ENCODE measurements at regions of chr14 and their contacts with region 1.

Region 1: DNA sequence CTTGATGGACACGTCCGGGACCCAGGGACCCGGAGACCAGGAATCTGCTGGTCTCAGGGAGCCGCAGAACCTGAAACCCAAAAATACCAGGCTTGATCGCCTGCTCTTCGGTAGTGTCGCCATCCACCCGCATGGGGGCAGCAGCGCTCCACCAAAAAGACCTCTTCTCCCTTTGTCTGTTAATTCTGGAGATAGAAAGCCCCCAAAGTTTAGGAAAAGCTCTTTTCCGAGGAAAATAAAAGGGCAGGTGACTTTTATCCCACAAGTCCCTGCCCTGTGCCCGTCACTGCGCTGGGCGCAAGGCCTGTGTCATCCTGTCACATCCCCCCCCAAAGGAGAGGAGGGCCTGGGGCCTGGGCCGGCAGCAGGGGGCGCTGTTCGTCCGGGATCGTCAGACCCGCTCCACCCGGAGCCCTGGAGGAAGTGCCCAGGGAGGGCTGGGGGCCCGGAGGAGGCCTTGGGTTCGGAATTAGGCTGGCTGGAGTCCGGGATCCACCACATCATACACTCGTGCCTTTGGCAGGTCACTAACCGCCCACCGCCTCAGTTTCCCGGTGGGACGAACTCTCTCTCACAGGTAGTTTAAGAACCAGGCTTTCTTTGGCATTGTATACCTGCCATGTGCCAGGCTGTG is 31.9 kb downstream of the DAD1 start:
- DNase-seq: peak; percentile 90
- ATAC-seq: peak; percentile 43
- H3K4me3 Mint-ChIP-seq: peak overlapping the region; percentile 80
- H3K27ac Mint-ChIP-seq: peak overlapping the region; percentile 98
- H3K4me1 Mint-ChIP-seq: peaks cover 88% of the 10 kb centered on the region
- H3K27me3 Mint-ChIP-seq: peaks cover 4% of the 10 kb centered on the region
- CTCF ChIP-seq: peak; percentile 100

Region 2: GRCh38 chr14:22403281-22403680 is 153.8 kb before region 1 on chr14:
- CTCF ChIA-PET with region 1: no interaction called
- POLR2A ChIA-PET with region 1: no interaction called
- intact Hi-C with region 1: no loop called
- DNase-seq: no peak
- ATAC-seq: no peak
- H3K4me3 Mint-ChIP-seq: no peak overlapping the region
- H3K27ac Mint-ChIP-seq: no peak overlapping the region
- H3K4me1 Mint-ChIP-seq: no peaks in the 10 kb centered on the region
- H3K27me3 Mint-ChIP-seq: peaks cover 2% of the 10 kb centered on the region
- CTCF ChIP-seq: no peak

Region 3: GRCh38 chr14:22448905-22449599 is 108.1 kb before region 1 on chr14:
- CTCF ChIA-PET with region 1: interaction called, 7 read pairs
- POLR2A ChIA-PET with region 1: interaction called, 15 read pairs
- intact Hi-C with region 1: no loop called
- DNase-seq: no peak
- ATAC-seq: peak; percentile 58
- H3K4me3 Mint-ChIP-seq: peak overlapping the region; percentile 3
- H3K27ac Mint-ChIP-seq: peak overlapping the region; percentile 78
- H3K4me1 Mint-ChIP-seq: peaks cover 23% of the 10 kb centered on the region
- H3K27me3 Mint-ChIP-seq: no peaks in the 10 kb centered on the region
- CTCF ChIP-seq: no peak

Region 4: GRCh38 chr14:22497144-22497423 is 60.0 kb before region 1 on chr14:
- CTCF ChIA-PET with region 1: interaction called, 24 read pairs
- POLR2A ChIA-PET with region 1: interaction called, 64 read pairs
- intact Hi-C with region 1: loop called (anchors 1 kb)
- DNase-seq: no peak
- ATAC-seq: peak; percentile 23
- H3K4me3 Mint-ChIP-seq: peak overlapping the region; percentile 12
- H3K27ac Mint-ChIP-seq: peak overlapping the region; percentile 81
- H3K4me1 Mint-ChIP-seq: peaks cover 69% of the 10 kb centered on the region
- H3K27me3 Mint-ChIP-seq: no peaks in the 10 kb centered on the region
- CTCF ChIP-seq: no peak

Region 5: GRCh38 chr14:22536853-22537338 is 20.2 kb before region 1 on chr14:
- CTCF ChIA-PET with region 1: interaction called, 48 read pairs
- POLR2A ChIA-PET with region 1: interaction called, 89 read pairs
- intact Hi-C with region 1: loop called (anchors 1 kb)
- DNase-seq: no peak
- ATAC-seq: peak; percentile 98
- H3K4me3 Mint-ChIP-seq: peak overlapping the region; percentile 63
- H3K27ac Mint-ChIP-seq: peak overlapping the region; percentile 86
- H3K4me1 Mint-ChIP-seq: peaks cover 84% of the 10 kb centered on the region
- H3K27me3 Mint-ChIP-seq: no peaks in the 10 kb centered on the region
- CTCF ChIP-seq: no peak

Region 6: DNA sequence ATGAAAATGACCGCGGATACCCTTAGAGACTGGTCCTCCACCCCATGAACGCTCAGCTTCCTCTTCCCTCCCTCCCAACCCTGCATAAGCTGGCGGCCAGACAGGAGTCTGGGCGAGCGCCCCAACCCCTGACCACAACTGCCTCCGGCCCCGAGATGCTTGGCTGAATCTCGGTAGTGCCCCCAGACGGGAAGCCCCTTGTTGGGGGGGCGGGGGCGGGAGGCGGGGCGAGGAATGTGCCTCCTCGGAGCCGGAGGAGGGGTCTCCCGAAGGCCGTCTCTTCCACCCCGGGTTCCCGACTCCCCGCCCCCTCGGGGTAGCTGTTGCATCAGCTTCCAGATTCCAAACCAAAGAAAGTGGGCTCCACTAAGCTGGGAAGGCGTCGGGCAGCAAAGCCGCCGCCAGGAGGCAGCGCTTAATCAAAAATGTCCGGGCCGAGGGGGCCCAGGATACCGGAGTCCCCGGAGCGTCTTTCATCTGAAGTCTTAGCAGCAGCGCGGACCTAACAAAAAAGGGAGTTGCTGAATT is 265.5 kb after region 1 on chr14:
- CTCF ChIA-PET with region 1: interaction called, 15 read pairs
- POLR2A ChIA-PET with region 1: interaction called, 7 read pairs
- intact Hi-C with region 1: loop called (anchors 1 kb)
- DNase-seq: peak; percentile 69
- ATAC-seq: peak; percentile 76
- H3K4me3 Mint-ChIP-seq: peak overlapping the region; percentile 86
- H3K27ac Mint-ChIP-seq: peak overlapping the region; percentile 92
- H3K4me1 Mint-ChIP-seq: peaks cover 60% of the 10 kb centered on the region
- H3K27me3 Mint-ChIP-seq: no peaks in the 10 kb centered on the region
- CTCF ChIP-seq: no peak

Region 7: DNA sequence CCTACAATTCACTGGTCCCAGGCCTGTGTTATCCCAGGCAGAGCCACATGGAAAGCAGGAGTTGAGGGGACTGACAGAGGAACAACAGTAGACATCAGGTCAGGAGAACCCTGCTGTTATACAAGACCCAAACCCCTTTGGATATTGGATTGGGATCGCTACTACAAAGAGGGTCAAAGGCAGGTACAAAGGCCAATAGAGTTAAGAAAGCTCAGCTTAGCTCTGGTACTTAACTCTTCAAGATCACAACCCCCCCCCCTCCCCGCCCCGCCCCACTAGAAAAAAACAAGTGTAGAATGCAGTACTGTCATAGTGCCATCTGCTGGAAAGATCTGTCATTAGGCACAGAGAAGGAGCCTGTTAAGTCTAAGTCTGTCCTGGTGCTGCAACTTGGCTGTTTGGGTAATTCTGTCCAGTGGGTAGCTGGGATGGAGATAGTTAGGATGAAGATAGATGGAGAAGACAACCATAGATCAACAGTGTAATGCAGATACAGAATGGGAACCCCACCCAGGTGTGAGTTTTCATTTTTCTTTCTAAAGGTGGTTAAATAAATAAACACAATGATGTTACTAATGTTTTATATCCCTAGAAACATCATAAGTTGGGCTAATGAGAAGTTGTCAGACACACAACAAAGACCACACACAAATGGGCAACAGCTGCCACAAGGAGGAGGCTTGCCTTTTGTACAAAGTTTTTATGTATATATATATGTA is 343.1 kb after region 1 on chr14:
- CTCF ChIA-PET with region 1: no interaction called
- POLR2A ChIA-PET with region 1: no interaction called
- intact Hi-C with region 1: loop called (anchors 1 kb)
- DNase-seq: no peak
- ATAC-seq: peak; percentile 91
- H3K4me3 Mint-ChIP-seq: no peak overlapping the region
- H3K27ac Mint-ChIP-seq: peak overlapping the region; percentile 43
- H3K4me1 Mint-ChIP-seq: peaks cover 5% of the 10 kb centered on the region
- H3K27me3 Mint-ChIP-seq: no peaks in the 10 kb centered on the region
- CTCF ChIP-seq: no peak